ENCODE measurements at regions of chrX and their contacts with region 1.

Region 1: GRCh38 chrX:113741744-113742143 is 842.1 kb upstream of the HTR2C start:
- DNase-seq: peak; percentile 63
- H3K4me3 Mint-ChIP-seq: no peak overlapping the region
- H3K27ac Mint-ChIP-seq: no peak overlapping the region
- H3K4me1 Mint-ChIP-seq: no peaks in the 10 kb centered on the region
- H3K27me3 Mint-ChIP-seq: peaks cover 76% of the 10 kb centered on the region
- CTCF ChIP-seq: peak; percentile 49

Region 2: DNA sequence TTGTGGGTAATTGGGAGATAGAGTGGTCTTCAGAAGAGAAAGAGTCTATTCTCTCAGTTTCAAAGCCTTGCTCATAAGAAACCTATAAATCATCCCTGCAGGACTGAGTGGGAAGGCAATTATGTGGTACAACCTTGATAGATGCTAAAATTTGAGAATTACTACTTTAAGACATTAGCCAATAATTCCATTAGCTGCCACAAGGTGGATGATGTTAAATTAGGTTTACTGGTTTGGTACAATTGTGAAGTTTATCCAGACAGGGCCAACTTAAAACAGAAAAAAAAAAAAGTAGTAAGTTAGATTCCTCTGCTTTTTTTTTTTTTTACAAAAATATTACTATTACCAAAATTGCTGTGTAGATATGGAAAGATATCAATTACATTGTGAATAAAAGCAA is 827.9 kb before region 1 on chrX:
- CTCF ChIA-PET with region 1: no interaction called
- POLR2A ChIA-PET with region 1: no interaction called
- intact Hi-C with region 1: loop called (anchors 5 kb)
- DNase-seq: peak; percentile 1
- H3K4me3 Mint-ChIP-seq: no peak overlapping the region
- H3K27ac Mint-ChIP-seq: no peak overlapping the region
- H3K4me1 Mint-ChIP-seq: no peaks in the 10 kb centered on the region
- H3K27me3 Mint-ChIP-seq: peaks cover 25% of the 10 kb centered on the region
- CTCF ChIP-seq: peak; percentile 24

Region 3: DNA sequence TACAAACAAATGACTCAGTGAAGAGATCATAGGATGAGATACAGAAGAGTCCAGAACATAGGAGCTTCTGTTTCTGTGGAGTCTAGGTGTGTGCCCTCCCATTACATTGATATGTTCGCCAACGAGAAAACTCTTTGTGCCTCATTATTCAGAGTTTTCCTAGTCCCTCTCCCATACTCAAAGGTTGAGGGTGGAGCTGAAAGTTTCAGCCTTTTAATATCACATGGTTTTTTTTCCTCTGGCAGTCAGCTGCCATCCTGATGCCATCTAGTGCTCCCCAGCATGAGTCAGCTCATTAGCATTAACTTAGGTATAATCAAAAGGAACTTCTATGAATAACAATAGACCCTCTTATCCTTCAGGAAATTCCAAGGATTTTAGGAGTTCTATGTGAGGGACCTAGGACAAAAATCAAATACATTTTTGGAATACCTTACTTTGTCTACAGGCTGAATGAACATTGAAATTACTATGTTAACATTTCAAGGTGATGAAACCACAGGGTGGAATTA is 341.5 kb before region 1 on chrX:
- CTCF ChIA-PET with region 1: no interaction called
- POLR2A ChIA-PET with region 1: no interaction called
- intact Hi-C with region 1: no loop called
- DNase-seq: peak; percentile 24
- H3K4me3 Mint-ChIP-seq: no peak overlapping the region
- H3K27ac Mint-ChIP-seq: peak overlapping the region; percentile 49
- H3K4me1 Mint-ChIP-seq: peaks cover 7% of the 10 kb centered on the region
- H3K27me3 Mint-ChIP-seq: peaks cover 29% of the 10 kb centered on the region
- CTCF ChIP-seq: no peak

Region 4: DNA sequence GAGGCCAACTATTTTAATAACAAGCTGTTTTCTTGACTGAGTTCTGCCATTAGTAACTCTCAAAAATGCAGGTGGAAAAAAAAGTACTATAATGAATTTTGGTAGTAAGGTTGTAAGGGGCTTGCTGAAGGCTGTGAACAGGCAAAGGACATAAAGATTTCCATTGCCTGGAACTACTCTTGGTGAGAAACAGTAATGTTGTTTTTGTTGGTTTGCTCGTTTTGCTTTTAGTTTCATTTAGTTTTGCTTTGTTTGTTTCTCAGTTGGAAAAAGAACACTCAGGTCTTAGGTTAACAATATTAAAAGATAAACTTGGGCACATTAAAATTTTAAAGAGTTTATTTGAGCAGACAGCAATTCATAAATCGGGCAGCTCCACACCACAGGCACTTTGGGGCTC is 17.7 kb after region 1 on chrX:
- CTCF ChIA-PET with region 1: interaction called, 10 read pairs
- POLR2A ChIA-PET with region 1: interaction called, 3 read pairs
- intact Hi-C with region 1: no loop called
- DNase-seq: no peak
- H3K4me3 Mint-ChIP-seq: no peak overlapping the region
- H3K27ac Mint-ChIP-seq: no peak overlapping the region
- H3K4me1 Mint-ChIP-seq: peaks cover 6% of the 10 kb centered on the region
- H3K27me3 Mint-ChIP-seq: peaks cover 76% of the 10 kb centered on the region
- CTCF ChIP-seq: no peak